Thyroid gland (tissue), 4 donors: ENCODE measurements at regions of chr2 and their contacts with region 1.

Region 1: DNA sequence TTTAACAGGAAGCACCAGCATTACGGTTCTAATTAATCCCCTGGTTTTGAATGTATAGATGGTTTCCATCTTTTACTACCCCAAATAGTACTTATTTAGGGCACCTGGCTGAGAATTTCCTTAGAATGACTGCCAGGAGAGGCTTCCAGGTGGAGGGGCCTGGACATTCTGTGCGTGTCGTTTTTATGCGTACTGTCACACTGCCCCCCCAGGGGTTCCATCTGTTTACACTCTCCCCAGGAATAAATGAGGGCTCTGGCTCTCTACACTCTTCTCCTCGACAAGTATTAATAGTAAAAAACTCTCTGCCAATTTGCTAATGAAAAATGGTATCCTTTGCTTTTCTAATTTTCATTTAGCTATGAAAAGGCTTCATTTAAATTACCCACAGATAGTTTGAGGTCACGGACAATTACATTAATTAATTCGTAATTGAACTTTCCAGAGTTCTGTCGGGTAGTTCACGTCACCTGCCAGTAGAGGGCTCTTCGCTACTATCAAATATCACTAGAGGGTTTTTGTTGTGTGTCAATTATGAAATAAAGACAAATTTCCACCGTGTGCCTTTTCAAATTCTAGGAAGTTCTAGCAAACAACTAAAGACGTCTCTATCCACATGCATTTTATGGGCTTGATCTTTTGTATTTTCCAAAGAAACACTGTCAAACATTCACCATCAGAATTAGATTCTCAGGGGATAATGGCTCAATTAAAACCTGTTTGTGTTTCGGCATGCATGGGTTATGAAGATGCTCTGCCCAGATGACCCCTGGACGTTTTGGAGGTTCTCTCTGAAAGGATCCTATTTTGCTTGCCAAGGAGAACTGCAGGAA is 88.8 kb upstream of the ASB18 start:
- DNase-seq: peak; percentile 31 to 35
- H3K4me3 ChIP-seq: no peak overlapping the region
- H3K27ac ChIP-seq: no peak overlapping the region
- H3K4me1 ChIP-seq: no peaks in the 10 kb centered on the region
- H3K27me3 ChIP-seq: no peaks in the 10 kb centered on the region
- CTCF ChIP-seq: peak; percentile 75 to 92 (median 85)
- POLR2A ChIP-seq: no peak

Region 2: GRCh38 chr2:236517251-236518031 is 164.5 kb after region 1 on chr2:
- intact Hi-C with region 1: no loop called
- DNase-seq: no peak
- H3K4me3 ChIP-seq: no peak overlapping the region
- H3K27ac ChIP-seq: no peak overlapping the region
- H3K4me1 ChIP-seq: peaks cover 7 to 11% of the 10 kb centered on the region in 2 donors
- H3K27me3 ChIP-seq: no peaks in the 10 kb centered on the region
- CTCF ChIP-seq: no peak
- POLR2A ChIP-seq: no peak

Region 3: DNA sequence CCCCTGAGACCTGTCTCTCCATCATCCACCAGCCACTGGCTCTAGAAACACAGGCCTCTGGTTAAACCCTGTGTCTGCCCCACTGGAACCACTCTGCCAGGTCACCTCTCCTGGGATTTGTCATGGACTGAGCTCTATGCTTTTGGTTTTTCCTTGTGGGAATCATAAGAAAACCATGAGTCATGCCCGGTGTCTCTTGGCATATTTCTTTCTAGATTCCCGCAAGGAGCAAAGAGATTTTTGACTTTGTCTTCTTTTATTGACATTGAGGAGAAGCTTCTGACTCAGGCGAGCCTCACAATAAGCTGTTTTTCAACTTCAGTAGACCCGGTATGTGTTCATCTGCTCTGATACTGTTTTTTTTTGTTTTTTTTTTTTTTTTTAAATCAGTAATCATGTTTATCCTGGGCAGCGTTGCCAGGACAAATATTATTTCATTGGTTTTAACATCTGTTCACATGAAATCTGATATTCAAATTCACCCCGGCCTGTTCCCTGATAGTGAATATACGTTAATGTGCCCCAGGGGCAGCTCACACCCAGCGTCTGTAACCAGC is 423.8 kb after region 1 on chr2:
- intact Hi-C with region 1: no loop called
- DNase-seq: no peak
- H3K4me3 ChIP-seq: no peak overlapping the region
- H3K27ac ChIP-seq: peak overlapping the region in 1 of 3 donors; percentile 2
- H3K4me1 ChIP-seq: peaks cover 11 to 26% of the 10 kb centered on the region in 2 donors
- H3K27me3 ChIP-seq: no peaks in the 10 kb centered on the region
- CTCF ChIP-seq: no peak
- POLR2A ChIP-seq: no peak

Region 4: DNA sequence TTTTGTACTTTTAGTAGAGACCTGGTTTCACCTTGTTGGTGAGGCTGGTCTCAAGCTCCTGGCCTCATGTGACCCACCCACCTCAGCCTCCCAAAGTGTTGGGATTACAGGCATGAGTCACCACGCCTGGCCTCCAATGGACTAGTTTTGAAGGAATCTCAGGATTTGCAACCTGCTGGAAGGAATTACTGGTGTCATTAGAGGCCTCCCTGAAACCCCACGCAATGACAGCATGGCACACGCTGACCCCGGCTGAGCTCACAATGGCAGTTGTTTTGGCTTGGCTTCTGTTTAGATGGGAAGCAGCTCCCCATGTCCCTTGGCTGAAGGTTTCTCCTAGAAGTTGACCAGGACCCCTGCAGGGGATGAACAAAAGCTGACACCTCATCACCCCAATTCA is 709.6 kb after region 1 on chr2:
- intact Hi-C with region 1: loop called (anchors 2 kb)
- DNase-seq: no peak
- H3K4me3 ChIP-seq: no peak overlapping the region
- H3K27ac ChIP-seq: no peak overlapping the region
- H3K4me1 ChIP-seq: peaks cover 0 to 17% of the 10 kb centered on the region in 2 donors
- H3K27me3 ChIP-seq: no peaks in the 10 kb centered on the region
- CTCF ChIP-seq: no peak
- POLR2A ChIP-seq: no peak